Activated CD4-positive, alpha-beta T cell treated with anti-CD3 and anti-CD28 coated beads for 36 hours (primary cell): ENCODE measurements at regions of chr21 and their contacts with region 1.

Region 1: DNA sequence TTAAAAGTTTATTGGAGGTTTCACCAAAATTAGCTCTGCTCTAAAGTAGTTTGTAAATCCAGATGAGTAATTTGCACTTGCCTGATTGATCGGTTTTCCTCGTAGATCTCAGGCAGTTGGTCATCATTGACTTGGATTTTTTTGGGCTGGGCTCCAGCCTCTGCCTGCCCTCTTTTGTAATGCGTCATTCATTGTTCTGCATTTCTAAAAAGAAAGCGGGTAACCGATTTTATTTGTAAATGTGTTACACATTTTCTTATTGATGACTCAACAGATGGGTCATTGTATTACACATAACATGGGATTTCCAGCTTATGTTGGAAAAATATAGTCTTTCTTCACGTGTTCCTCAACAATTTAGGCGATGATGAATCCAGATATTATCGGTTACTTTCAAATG is 5.5 kb downstream of the ETS2 start:
- DNase-seq: no peak
- ATAC-seq: no peak
- H3K4me3 Mint-ChIP-seq: no peak overlapping the region
- H3K27ac Mint-ChIP-seq: no peak overlapping the region
- H3K4me1 Mint-ChIP-seq: peaks cover 46% of the 10 kb centered on the region
- H3K27me3 Mint-ChIP-seq: no peaks in the 10 kb centered on the region

Region 2: DNA sequence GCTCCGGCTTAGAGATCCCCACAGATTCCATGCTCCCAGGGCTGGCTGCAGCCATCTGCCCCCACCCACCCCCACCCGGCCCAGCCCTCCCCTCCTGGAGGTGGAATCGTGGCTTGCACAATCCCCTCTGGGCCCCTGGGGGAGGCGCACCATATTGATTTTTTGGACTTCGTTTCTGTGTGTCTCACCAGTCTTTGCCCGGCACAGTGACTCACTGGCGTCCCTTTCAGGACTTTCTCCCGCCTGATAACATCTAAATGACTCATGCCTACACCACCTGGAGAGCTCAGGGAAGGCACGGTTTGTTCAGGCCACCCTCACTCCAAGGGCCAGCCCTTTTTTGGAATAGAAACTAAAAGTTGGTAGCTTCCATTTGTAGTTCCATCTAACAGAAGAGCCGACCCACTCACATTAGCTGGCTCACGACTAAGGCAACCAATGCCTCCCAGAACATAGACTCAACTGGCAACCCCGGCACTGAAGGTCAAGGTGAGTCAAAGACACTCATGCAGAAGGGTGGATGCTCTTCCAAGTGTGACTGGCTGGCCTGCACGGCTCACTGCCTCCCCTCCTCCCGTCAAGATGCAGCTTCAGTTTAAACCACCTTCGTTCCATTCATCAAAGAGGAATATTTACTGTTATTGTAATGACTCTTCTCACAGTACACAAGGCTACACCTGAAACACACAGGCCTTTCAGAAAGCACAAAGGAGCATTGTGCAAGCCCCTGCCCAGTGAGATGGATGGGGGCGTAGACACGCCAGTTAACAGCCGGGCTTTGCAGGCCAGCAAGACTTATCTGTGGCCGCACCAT is 23.6 kb before region 1 on chr21:
- CTCF ChIA-PET with region 1: no interaction called
- POLR2A ChIA-PET with region 1: no interaction called
- intact Hi-C with region 1: no loop called
- DNase-seq: peak; percentile 24
- ATAC-seq: peak; percentile 75
- H3K4me3 Mint-ChIP-seq: no peak overlapping the region
- H3K27ac Mint-ChIP-seq: no peak overlapping the region
- H3K4me1 Mint-ChIP-seq: peaks cover 11% of the 10 kb centered on the region
- H3K27me3 Mint-ChIP-seq: no peaks in the 10 kb centered on the region

Region 3: GRCh38 chr21:38918616-38919346 is 107.5 kb after region 1 on chr21:
- CTCF ChIA-PET with region 1: no interaction called
- POLR2A ChIA-PET with region 1: interaction called, 12 read pairs
- intact Hi-C with region 1: no loop called
- DNase-seq: no peak
- ATAC-seq: no peak
- H3K4me3 Mint-ChIP-seq: no peak overlapping the region
- H3K27ac Mint-ChIP-seq: no peak overlapping the region
- H3K4me1 Mint-ChIP-seq: no peaks in the 10 kb centered on the region
- H3K27me3 Mint-ChIP-seq: peaks cover 23% of the 10 kb centered on the region

Region 4: DNA sequence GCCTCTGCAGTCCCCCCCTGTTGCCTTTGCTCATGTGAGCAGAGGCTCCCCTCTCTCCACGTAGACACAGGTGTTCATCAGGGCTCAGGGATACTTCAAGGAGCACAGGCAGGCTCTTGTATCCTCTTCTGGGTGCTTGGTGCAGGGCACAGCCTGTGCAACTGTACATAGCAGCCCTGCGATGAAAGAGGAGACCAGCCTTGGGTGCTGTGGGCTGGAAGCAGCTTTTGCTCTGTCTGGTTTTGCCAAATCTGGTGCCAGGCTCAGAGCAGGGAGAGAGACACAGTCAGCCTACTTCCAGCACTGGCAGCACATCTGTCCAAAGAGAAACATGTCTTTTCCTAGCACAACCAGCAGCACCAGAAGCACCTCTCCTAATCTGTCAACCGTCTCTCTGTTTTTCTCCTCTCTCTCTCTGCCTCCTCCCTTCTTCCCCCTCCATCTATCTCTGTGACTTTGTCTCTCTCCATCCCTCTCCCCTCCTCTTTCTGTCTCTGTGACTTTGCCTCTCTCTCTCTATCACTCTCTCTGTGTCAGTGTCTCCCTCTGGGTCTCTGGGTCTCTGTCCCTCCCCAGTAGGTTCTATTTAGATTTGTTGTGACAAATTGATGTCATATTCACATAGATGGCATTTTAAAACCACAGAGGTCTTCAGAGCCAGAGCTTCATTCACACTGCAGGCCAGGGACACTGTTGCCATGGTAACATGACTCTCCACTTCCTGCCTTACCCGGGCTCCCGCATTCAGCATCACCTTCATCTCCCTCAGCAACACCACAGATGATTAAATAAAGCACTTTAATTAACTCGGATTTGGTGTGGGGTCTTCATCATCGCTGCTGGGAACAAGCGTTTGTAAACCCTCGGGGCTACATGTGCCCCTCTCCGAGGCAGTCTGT is 126.8 kb after region 1 on chr21:
- CTCF ChIA-PET with region 1: no interaction called
- POLR2A ChIA-PET with region 1: no interaction called
- intact Hi-C with region 1: no loop called
- DNase-seq: peak; percentile 59
- ATAC-seq: peak; percentile 93
- H3K4me3 Mint-ChIP-seq: no peak overlapping the region
- H3K27ac Mint-ChIP-seq: peak overlapping the region; percentile 29
- H3K4me1 Mint-ChIP-seq: peaks cover 14% of the 10 kb centered on the region
- H3K27me3 Mint-ChIP-seq: no peaks in the 10 kb centered on the region

Region 5: GRCh38 chr21:39037807-39038405 is 226.6 kb after region 1 on chr21:
- CTCF ChIA-PET with region 1: no interaction called
- POLR2A ChIA-PET with region 1: no interaction called
- intact Hi-C with region 1: no loop called
- DNase-seq: peak; percentile 16
- ATAC-seq: peak; percentile 19
- H3K4me3 Mint-ChIP-seq: no peak overlapping the region
- H3K27ac Mint-ChIP-seq: no peak overlapping the region
- H3K4me1 Mint-ChIP-seq: peaks cover 12% of the 10 kb centered on the region
- H3K27me3 Mint-ChIP-seq: peaks cover 10% of the 10 kb centered on the region